ENCODE measurements at regions of chr5 and their contacts with region 1.

Region 1: DNA sequence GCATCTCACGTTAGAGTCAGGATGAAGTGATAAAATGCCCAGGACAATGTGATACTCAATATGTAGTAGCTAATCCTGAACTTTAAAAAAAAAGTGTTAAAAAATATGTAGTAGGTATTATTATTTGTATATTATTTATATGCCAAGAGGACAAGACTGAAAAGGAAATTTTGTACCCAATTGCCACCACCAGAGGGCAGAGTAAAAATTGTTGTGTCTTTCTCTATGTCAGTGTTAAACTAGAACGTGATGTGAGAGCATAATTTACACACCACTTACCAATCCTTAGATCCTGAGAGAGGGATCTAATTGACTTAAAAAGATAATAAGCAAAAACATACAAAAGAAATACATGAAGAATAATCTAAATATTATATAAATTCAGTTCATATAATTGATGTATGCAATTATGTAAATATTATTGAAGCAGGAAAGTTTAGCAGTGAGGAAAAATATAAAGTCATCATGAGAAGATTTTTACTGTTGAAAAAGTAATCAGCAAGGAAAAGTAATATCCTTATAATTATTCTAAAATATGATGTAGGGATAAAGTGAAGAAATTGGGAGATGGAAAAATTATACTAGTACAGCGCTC is 288.9 kb downstream of the RAB3C start:
- DNase-seq: peak; percentile 15
- H3K4me3 ChIP-seq: no peak overlapping the region
- H3K27ac ChIP-seq: no peak overlapping the region
- H3K4me1 ChIP-seq: no peaks in the 10 kb centered on the region
- H3K27me3 ChIP-seq: peaks cover 9% of the 10 kb centered on the region
- CTCF ChIP-seq: peak; percentile 53 to 66

Region 2: GRCh38 chr5:58946230-58946629 is 74.5 kb after region 1 on chr5:
- CTCF ChIA-PET with region 1: no interaction called
- dilution Hi-C with region 1: no loop called
- in situ Hi-C with region 1: no loop called
- intact Hi-C with region 1: no loop called
- DNase-seq: no peak
- H3K4me3 ChIP-seq: no peak overlapping the region
- H3K27ac ChIP-seq: no peak overlapping the region
- H3K4me1 ChIP-seq: no peaks in the 10 kb centered on the region
- H3K27me3 ChIP-seq: peaks cover 7% of the 10 kb centered on the region
- CTCF ChIP-seq: no peak

Region 3: GRCh38 chr5:59007460-59008063 is 135.8 kb after region 1 on chr5:
- CTCF ChIA-PET with region 1: no interaction called
- dilution Hi-C with region 1: no loop called
- in situ Hi-C with region 1: no loop called
- intact Hi-C with region 1: loop called (anchors 5 kb)
- DNase-seq: no peak
- H3K4me3 ChIP-seq: no peak overlapping the region
- H3K27ac ChIP-seq: no peak overlapping the region
- H3K4me1 ChIP-seq: no peaks in the 10 kb centered on the region
- H3K27me3 ChIP-seq: no peaks in the 10 kb centered on the region
- CTCF ChIP-seq: peak; percentile 40 to 53

Region 4: DNA sequence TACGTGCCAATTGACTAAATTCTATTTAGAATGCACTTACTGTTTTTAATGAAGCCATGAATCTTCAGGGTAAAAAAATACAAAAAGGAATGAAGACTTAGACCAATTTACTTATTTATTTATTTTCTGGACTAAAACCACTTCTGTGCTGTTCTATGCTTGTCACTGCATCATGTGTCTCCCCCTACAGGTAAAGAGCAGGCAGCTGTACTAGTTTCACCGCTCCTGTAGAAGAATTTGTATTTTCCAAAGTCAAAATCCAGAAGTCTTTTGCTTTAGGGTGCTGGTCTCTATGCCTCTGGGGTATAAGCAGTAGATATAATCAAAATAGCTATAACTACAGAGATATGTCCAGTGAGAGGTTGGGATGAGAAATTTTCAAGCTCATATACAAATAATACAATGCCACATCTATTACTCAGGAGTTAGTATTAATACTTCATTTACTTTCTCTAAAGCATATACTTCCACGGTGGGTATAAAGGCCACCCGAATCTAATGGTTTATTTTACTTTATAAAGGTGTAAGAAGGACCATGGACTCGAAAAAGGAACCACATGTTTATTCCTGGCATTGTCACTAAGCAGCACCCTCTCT is 302.6 kb after region 1 on chr5:
- CTCF ChIA-PET with region 1: no interaction called
- dilution Hi-C with region 1: no loop called
- in situ Hi-C with region 1: loop called in 1 of 2 experiments (anchors 25 kb)
- intact Hi-C with region 1: loop called (anchors 1 kb)
- DNase-seq: peak; percentile 35
- H3K4me3 ChIP-seq: no peak overlapping the region
- H3K27ac ChIP-seq: no peak overlapping the region
- H3K4me1 ChIP-seq: no peaks in the 10 kb centered on the region
- H3K27me3 ChIP-seq: no peaks in the 10 kb centered on the region
- CTCF ChIP-seq: peak; percentile 91 to 93

Region 5: DNA sequence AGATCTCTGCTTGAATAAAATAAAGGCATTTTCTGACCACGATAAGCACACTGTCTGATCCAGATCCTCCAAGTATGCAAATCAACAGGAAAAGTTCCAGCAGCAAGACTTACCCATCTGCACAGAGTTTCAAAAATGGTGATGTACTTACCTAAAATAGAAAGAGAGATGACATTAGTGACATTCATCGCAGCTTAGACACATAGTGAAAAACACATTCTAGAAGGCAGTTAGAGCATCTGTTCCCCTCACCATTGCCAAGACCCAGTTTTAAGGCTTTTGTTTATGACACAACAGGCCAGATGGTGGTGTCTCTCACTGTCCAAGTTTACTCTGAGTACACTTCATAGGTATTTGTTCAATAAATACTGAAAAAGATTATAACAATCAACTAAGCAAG is 814.0 kb after region 1 on chr5:
- CTCF ChIA-PET with region 1: no interaction called
- dilution Hi-C with region 1: no loop called
- in situ Hi-C with region 1: no loop called
- intact Hi-C with region 1: no loop called
- DNase-seq: no peak
- H3K4me3 ChIP-seq: no peak overlapping the region
- H3K27ac ChIP-seq: no peak overlapping the region
- H3K4me1 ChIP-seq: peaks cover 8% of the 10 kb centered on the region
- H3K27me3 ChIP-seq: no peaks in the 10 kb centered on the region
- CTCF ChIP-seq: no peak

Measured in mammary epithelial cell (primary cell).